CD4-positive, alpha-beta T cell (primary cell): ENCODE measurements at regions of chr22 and their contacts with region 1.

Region 1: GRCh38 chr22:30104501-30105156 is 24.4 kb downstream of the HORMAD2 start:
- DNase-seq: peak in 3 of 14 experiments; percentile 23 to 66 (median 35)
- ATAC-seq: peak; percentile 69
- H3K4me3 ChIP-seq: no peak overlapping the region
- H3K4me3 Mint-ChIP-seq: no peak overlapping the region
- H3K27ac ChIP-seq: no peak overlapping the region
- H3K27ac Mint-ChIP-seq: no peak overlapping the region
- H3K4me1 ChIP-seq: peaks cover 7% of the 10 kb centered on the region
- H3K4me1 Mint-ChIP-seq: peaks cover 35% of the 10 kb centered on the region
- H3K27me3 ChIP-seq: no peaks in the 10 kb centered on the region
- H3K27me3 Mint-ChIP-seq: no peaks in the 10 kb centered on the region
- CTCF ChIP-seq: no peak

Region 2: DNA sequence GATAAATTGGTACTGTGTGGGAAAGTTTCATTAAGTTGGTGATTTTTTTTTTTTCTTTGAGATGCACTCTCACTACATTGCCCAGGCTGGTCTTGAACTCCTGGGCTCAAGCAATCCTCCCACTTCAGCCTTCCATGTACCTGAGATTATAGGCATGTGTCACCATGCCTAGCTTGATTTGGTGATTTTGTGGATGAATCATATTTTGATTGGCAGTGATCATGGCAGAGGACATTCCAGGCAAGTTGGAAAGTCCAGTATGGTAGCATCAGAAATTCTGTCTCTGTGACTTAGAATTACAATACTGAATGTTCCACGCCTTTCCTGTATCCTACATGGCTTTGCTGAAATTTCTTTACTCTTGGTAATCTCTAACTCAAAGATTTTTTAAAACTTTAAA is 25.0 kb after region 1 on chr22:
- CTCF ChIA-PET with region 1: no interaction called
- POLR2A ChIA-PET with region 1: no interaction called
- intact Hi-C with region 1: no loop called
- DNase-seq: no peak
- ATAC-seq: no peak
- H3K4me3 ChIP-seq: no peak overlapping the region
- H3K4me3 Mint-ChIP-seq: no peak overlapping the region
- H3K27ac ChIP-seq: no peak overlapping the region
- H3K27ac Mint-ChIP-seq: no peak overlapping the region
- H3K4me1 ChIP-seq: no peaks in the 10 kb centered on the region
- H3K4me1 Mint-ChIP-seq: no peaks in the 10 kb centered on the region
- H3K27me3 ChIP-seq: no peaks in the 10 kb centered on the region
- H3K27me3 Mint-ChIP-seq: peaks cover 5% of the 10 kb centered on the region
- CTCF ChIP-seq: no peak

Region 3: GRCh38 chr22:30262917-30263741 is 158.5 kb after region 1 on chr22:
- CTCF ChIA-PET with region 1: no interaction called
- POLR2A ChIA-PET with region 1: no interaction called
- intact Hi-C with region 1: loop called (anchors 2 to 5 kb)
- DNase-seq: peak; percentile 68 to 89 (median 76)
- ATAC-seq: no peak
- H3K4me3 ChIP-seq: peak overlapping the region; percentile 21
- H3K4me3 Mint-ChIP-seq: peak overlapping the region; percentile 81
- H3K27ac ChIP-seq: peak overlapping the region in 1 of 2 donors; percentile 14
- H3K27ac Mint-ChIP-seq: peak overlapping the region; percentile 81
- H3K4me1 ChIP-seq: peaks cover 60% of the 10 kb centered on the region
- H3K4me1 Mint-ChIP-seq: peaks cover 49% of the 10 kb centered on the region
- H3K27me3 ChIP-seq: no peaks in the 10 kb centered on the region
- H3K27me3 Mint-ChIP-seq: no peaks in the 10 kb centered on the region
- CTCF ChIP-seq: peak; percentile 100

Region 4: GRCh38 chr22:30485362-30485988 is 380.8 kb after region 1 on chr22:
- CTCF ChIA-PET with region 1: no interaction called
- POLR2A ChIA-PET with region 1: no interaction called
- intact Hi-C with region 1: loop called (anchors 5 to 10 kb)
- DNase-seq: peak; percentile 58 to 88 (median 74)
- ATAC-seq: peak; percentile 98
- H3K4me3 ChIP-seq: no peak overlapping the region
- H3K4me3 Mint-ChIP-seq: no peak overlapping the region
- H3K27ac ChIP-seq: no peak overlapping the region
- H3K27ac Mint-ChIP-seq: no peak overlapping the region
- H3K4me1 ChIP-seq: peaks cover 6% of the 10 kb centered on the region
- H3K4me1 Mint-ChIP-seq: no peaks in the 10 kb centered on the region
- H3K27me3 ChIP-seq: peaks cover 0 to 2% of the 10 kb centered on the region in 2 experiments
- H3K27me3 Mint-ChIP-seq: peaks cover 5% of the 10 kb centered on the region
- CTCF ChIP-seq: peak; percentile 98